Activated CD8-positive, alpha-beta T cell treated with anti-CD3 and anti-CD28 coated beads, Interleukin-2, amount 10 ng/mL, durations not matched to agents 7 days and 5 days (primary cell): ENCODE measurements at regions of chr17 and their contacts with region 1.

Region 1: GRCh38 chr17:50200457-50201275 is 765 bp downstream of the COL1A1 start:
- DNase-seq: peak; percentile 88
- ATAC-seq: peak; percentile 82
- H3K4me3 Mint-ChIP-seq: peak overlapping the region; percentile 70
- H3K27ac Mint-ChIP-seq: no peak overlapping the region
- H3K4me1 Mint-ChIP-seq: peaks cover 20% of the 10 kb centered on the region
- H3K27me3 Mint-ChIP-seq: peaks cover 42% of the 10 kb centered on the region

Region 2: DNA sequence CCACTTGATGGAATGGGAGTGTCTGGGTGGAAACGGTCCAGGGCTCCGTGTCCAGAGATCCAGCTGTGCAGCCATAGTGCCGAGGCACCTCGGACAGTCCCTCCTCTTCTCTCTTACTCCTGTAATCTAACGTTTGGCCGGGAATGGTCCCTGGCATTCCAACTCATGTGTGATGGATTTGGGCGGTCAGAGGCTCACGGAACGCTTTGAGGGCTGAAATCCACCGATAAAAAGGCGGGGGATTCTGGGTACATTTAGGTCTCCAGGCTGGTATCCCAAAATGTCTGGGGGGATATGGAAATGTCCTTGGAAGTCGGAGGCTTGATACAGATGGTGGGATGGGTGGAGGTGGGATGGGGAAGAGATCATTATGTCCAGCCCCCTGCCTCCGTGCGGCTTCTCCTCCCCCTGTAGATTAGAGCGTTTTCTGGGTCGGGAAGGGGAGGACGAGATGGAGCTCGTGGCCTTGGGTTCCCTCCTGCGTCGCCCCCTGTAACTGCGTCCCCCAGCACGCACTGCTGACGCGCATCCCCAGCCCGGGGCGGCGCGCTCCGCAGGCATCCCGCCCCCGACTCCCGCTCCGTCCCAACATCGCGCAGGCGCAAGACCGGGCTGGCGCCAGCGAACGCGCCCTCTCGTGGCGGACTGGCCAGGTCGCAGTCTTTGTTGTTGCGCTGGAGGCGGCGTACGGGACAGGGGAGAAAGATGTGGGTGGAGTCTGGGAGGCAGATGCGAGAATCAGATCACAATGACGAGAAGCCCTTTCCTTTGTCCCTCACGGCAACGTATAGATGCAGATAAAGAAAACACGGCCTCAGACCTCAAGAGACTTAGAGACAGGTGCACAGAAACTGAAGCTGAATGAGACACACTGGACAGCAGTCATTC is 39.4 kb before region 1 on chr17:
- CTCF ChIA-PET with region 1: interaction called, 14 read pairs
- POLR2A ChIA-PET with region 1: no interaction called
- DNase-seq: peak; percentile 96
- ATAC-seq: peak; percentile 97
- H3K4me3 Mint-ChIP-seq: peak overlapping the region; percentile 75
- H3K27ac Mint-ChIP-seq: peak overlapping the region; percentile 88
- H3K4me1 Mint-ChIP-seq: peaks cover 49% of the 10 kb centered on the region
- H3K27me3 Mint-ChIP-seq: peaks cover 7% of the 10 kb centered on the region

Region 3: GRCh38 chr17:50213026-50214022 is 12.7 kb after region 1 on chr17:
- CTCF ChIA-PET with region 1: interaction called, 100 read pairs
- POLR2A ChIA-PET with region 1: no interaction called
- DNase-seq: peak; percentile 68
- ATAC-seq: peak; percentile 86
- H3K4me3 Mint-ChIP-seq: no peak overlapping the region
- H3K27ac Mint-ChIP-seq: peak overlapping the region; percentile 70
- H3K4me1 Mint-ChIP-seq: peaks cover 10% of the 10 kb centered on the region
- H3K27me3 Mint-ChIP-seq: peaks cover 53% of the 10 kb centered on the region

Region 4: DNA sequence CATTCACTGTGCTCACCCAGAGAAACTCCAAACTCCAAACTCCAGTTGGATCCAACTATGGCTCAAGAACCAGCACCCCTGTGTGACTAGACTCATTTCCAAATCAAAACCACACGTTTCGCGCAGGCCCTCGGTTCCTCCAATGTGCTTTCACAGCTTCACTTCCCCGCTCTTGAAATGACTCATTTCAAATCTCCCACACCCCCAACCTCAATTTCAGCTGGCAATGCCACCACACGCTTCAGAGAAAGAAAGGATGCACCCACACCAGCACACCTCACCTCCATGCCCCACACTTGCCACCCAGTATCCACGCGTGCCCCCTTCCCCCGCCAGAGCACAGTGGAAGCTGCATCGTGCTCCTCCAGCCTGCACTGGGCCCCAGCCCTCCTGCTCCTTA is 82.6 kb after region 1 on chr17:
- CTCF ChIA-PET with region 1: interaction called, 31 read pairs
- POLR2A ChIA-PET with region 1: no interaction called
- DNase-seq: no peak
- ATAC-seq: no peak
- H3K4me3 Mint-ChIP-seq: no peak overlapping the region
- H3K27ac Mint-ChIP-seq: no peak overlapping the region
- H3K4me1 Mint-ChIP-seq: peaks cover 11% of the 10 kb centered on the region
- H3K27me3 Mint-ChIP-seq: peaks cover 20% of the 10 kb centered on the region

Region 5: GRCh38 chr17:50297407-50297865 is 96.8 kb after region 1 on chr17:
- CTCF ChIA-PET with region 1: interaction called, 148 read pairs
- POLR2A ChIA-PET with region 1: no interaction called
- DNase-seq: peak; percentile 85
- ATAC-seq: peak; percentile 95
- H3K4me3 Mint-ChIP-seq: no peak overlapping the region
- H3K27ac Mint-ChIP-seq: no peak overlapping the region
- H3K4me1 Mint-ChIP-seq: peaks cover 5% of the 10 kb centered on the region
- H3K27me3 Mint-ChIP-seq: peaks cover 9% of the 10 kb centered on the region

Region 6: DNA sequence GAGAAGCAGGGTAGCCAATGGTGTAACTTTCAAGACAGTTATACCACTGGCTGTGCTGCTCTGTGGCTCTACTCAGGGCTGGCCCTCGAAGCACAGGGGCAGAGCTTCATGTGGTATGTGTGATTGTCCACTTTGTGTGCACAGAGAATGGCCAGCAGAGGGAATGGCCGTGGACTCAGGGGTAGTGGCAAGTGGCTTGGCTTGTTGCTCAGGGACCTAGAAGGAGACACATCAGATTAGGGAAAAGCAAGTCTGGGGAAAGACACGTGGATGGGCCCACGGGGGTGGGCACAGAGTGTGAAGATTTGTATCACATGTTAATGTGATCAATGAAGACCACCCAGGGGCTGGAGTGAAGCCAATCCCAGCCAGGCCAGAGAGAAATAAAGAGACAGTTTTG is 125.2 kb after region 1 on chr17:
- CTCF ChIA-PET with region 1: no interaction called
- POLR2A ChIA-PET with region 1: no interaction called
- DNase-seq: no peak
- ATAC-seq: no peak
- H3K4me3 Mint-ChIP-seq: no peak overlapping the region
- H3K27ac Mint-ChIP-seq: no peak overlapping the region
- H3K4me1 Mint-ChIP-seq: no peaks in the 10 kb centered on the region
- H3K27me3 Mint-ChIP-seq: no peaks in the 10 kb centered on the region

Region 7: GRCh38 chr17:50361561-50362480 is 161.2 kb after region 1 on chr17:
- CTCF ChIA-PET with region 1: interaction called, 12 read pairs
- POLR2A ChIA-PET with region 1: no interaction called
- DNase-seq: peak; percentile 76
- ATAC-seq: peak; percentile 86
- H3K4me3 Mint-ChIP-seq: no peak overlapping the region
- H3K27ac Mint-ChIP-seq: peak overlapping the region; percentile 84
- H3K4me1 Mint-ChIP-seq: peaks cover 29% of the 10 kb centered on the region
- H3K27me3 Mint-ChIP-seq: no peaks in the 10 kb centered on the region